ENCODE measurements at regions of chr14 and their contacts with region 1.

Region 1: DNA sequence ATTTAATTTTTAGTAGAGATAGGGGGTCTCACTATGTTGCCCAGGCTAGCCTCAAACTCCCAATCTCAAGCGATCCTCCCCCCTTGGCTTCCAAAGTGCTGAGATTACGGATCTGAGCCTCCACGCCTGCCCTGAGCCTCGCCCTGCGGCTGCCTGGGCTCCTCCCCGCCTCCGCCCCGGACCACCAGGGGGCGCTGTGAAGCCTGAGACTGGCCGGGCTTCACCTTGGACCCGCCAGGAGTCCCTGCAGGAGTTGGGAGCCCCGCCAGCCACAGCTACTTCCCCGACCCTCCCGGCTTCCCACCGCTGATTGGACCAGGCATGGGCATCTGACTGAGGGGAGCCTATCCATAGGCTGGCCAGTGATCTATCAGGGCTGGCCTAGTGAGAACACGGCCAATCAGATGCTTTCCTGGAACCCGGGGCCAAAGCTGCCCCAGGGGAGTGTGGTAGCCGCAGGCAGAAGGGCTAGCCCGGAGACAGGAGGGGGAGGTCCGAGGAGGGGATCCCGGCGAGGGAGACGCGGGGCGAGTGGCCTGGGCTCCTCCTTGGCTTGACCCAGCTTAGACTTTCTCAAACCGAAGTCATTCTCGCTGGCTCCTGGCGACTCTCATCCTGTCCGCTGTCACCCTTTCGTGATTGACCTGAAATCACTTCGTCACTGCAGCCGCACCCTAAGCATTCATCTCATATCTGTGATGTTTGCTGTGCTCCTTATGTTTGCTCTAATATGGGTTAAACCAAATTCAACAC is 15.1 kb upstream of the ANKRD9 start:
- DNase-seq: peak; percentile 98 to 99
- ATAC-seq: peak; percentile 96 to 98 (median 98)
- H3K4me3 ChIP-seq: peak overlapping the region; percentile 68
- H3K27ac ChIP-seq: peak overlapping the region; percentile 70
- H3K4me1 ChIP-seq: peaks cover 11% of the 10 kb centered on the region
- H3K27me3 ChIP-seq: no peaks in the 10 kb centered on the region
- CTCF ChIP-seq: peak; percentile 95

Region 2: DNA sequence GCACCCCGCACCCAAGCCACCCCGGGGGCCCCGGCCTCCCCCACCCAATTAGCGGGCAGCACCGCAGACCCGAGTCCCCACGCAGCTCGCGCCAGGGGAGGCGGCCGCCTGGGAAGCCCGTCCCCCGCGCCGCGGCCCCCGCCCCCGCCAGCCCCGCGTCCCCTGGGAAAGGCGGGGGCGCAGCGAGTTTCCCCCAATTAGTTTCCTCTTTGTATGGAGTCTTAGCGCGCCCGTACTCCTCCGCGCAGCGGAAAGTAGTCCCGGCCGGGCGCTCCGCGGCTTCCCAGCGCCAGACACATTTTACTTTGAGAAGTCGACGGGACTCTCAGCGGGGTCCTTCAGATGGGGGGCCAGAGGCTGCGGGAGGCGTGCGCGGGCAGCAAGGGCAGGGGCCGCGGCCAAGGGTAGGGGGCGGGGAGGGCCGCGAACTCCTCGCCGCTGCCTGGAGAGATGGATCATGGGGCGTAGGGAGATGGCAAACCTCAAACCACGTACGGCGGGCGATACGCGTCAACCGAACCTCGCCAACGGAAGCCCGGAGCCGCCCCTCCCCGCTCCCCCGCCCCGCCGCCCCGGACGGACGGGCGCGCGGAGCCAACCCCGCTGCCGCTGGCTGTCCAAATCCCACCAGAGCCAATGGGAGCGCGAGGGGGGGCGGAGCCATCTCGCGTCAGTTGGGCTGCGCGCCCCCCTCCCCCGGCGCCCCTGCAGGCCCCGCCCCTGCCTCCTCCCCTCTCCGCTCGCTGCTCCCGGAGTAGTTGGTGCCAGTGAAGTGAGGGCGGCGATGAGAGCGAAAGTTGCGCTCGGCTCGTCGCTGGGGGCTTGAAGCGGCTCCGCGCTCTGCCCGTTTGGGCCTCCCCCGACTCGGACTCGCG is 67.5 kb after region 1 on chr14 and contains the start of gene RCOR1:
- intact Hi-C with region 1: loop called in 1 of 2 experiments (anchors 2 kb)
- DNase-seq: peak; percentile 99
- ATAC-seq: peak; percentile 93 to 95 (median 94)
- H3K4me3 ChIP-seq: peak within 1 kb of the TSS; percentile 93
- H3K27ac ChIP-seq: peak within 1 kb of the TSS; percentile 88
- H3K4me1 ChIP-seq: peaks cover 11% of the 10 kb centered on the region
- H3K27me3 ChIP-seq: no peaks in the 10 kb centered on the region
- CTCF ChIP-seq: no peak
- total RNA-seq, gene RCOR1: 11.6 to 17.7 (median 15.8) TPM

Region 3: DNA sequence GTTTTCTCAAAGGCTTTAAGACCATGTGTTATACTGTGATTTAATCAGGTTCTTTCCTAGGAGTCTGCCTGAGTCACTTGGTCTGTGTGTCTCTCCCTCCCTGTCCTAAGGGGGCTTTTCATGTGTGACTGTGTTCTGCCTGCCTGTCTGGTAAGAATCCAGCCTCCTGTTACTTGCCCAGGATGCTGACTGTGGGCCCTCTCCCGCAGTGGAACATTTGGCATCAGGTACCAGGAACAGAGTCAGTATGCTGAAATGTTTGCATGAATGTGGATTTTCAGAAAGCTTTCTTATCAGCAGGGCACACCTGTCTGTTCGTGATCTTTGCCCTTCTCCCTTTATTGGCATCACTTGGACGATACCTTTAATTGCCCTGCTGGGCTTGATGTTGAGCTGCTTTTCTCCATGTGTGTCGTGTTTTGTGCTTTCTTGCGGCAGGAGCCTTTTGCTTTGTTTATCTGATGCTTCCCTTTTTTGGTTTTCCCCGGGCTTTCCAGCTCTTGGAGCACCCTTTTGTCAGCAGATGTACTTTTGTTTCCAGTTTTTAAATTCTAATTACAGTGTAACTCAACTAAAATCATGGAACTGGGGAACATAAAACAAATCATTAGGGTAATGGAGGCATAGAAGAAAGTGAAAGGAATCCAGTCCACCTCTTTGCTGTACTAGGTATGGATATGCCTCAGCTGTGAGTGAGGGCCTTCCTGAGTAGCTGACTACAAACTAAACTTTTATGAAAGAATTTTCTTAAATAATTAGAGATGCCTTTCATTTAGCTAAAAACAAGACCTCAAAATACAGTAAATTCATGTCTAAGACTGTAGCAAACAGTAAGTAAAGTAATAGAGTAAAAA is 325.1 kb after region 1 on chr14:
- intact Hi-C with region 1: no loop called
- DNase-seq: no peak
- ATAC-seq: peak in 2 of 4 donors; percentile 21 to 30
- H3K4me3 ChIP-seq: no peak overlapping the region
- H3K27ac ChIP-seq: no peak overlapping the region
- H3K4me1 ChIP-seq: peaks cover 4% of the 10 kb centered on the region
- H3K27me3 ChIP-seq: no peaks in the 10 kb centered on the region
- CTCF ChIP-seq: no peak